B cell (primary cell): ENCODE measurements at regions of chr7 and their contacts with region 1.

Region 1: GRCh38 chr7:24979863-24980533 is at the start of gene OSBPL3:
- DNase-seq: peak; percentile 96
- ATAC-seq: peak; percentile 89
- H3K4me3 ChIP-seq: peak within 1 kb of the TSS; percentile 73 to 97 (median 87)
- H3K4me3 Mint-ChIP-seq: peak within 1 kb of the TSS; percentile 95
- H3K27ac ChIP-seq: peak within 1 kb of the TSS; percentile 55 to 78
- H3K27ac Mint-ChIP-seq: peak within 1 kb of the TSS; percentile 96
- H3K4me1 ChIP-seq: peaks cover 17 to 27% of the 10 kb centered on the region in 2 donors
- H3K4me1 Mint-ChIP-seq: peaks cover 52% of the 10 kb centered on the region
- H3K27me3 ChIP-seq: no peaks in the 10 kb centered on the region
- H3K27me3 Mint-ChIP-seq: no peaks in the 10 kb centered on the region
- CTCF ChIP-seq: no peak
- total RNA-seq, gene OSBPL3: 67.6 and 80.6 TPM in 2 replicates

Region 2: DNA sequence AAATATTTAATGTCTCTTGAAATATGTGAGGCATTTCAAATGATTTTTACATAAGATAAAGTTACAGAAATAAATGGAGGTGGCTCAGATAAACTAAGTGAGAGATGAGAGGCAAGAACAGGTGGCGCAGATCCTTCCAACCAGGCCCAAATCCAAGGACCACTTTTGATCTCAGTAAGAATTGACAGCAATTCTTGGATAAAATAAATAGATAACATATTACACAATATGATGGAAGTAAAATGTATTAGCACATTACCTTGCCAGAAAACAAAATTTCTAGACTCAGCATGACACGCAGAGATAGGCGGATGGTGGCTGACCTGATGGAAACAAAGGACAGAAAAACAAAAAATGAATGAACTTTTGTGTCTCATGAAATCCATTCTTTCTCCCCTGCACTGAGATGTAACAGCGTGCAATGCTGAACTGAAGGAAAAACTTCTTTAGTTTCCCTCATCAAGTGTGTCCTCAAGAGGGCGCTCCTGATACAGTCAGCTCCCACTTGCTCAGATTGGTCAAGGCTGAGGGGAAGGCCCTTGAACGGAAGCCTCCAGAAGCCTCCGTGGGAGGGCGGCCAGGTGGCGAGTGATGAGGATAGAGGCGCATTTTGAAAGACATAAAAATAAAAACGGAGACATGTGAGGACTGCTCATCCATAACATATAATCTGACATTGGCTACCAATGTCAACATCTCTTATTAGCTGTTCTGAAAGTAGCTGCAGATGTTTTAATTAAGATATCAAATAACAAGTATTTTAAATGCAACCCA is 159.9 kb before region 1 on chr7:
- CTCF ChIA-PET with region 1: interaction called, 116 read pairs
- POLR2A ChIA-PET with region 1: interaction called, 6 read pairs
- intact Hi-C with region 1: loop called (anchors 1 kb)
- DNase-seq: peak; percentile 88
- ATAC-seq: peak; percentile 56
- H3K4me3 ChIP-seq: peak overlapping the region in 1 of 5 experiments; percentile 17
- H3K4me3 Mint-ChIP-seq: peak overlapping the region; percentile 83
- H3K27ac ChIP-seq: peak overlapping the region; percentile 76 to 83
- H3K27ac Mint-ChIP-seq: peak overlapping the region; percentile 94
- H3K4me1 ChIP-seq: peaks cover 27% of the 10 kb centered on the region in 2 donors
- H3K4me1 Mint-ChIP-seq: peaks cover 40% of the 10 kb centered on the region
- H3K27me3 ChIP-seq: no peaks in the 10 kb centered on the region
- H3K27me3 Mint-ChIP-seq: no peaks in the 10 kb centered on the region
- CTCF ChIP-seq: peak; percentile 93

Region 3: GRCh38 chr7:24877790-24878311 is 102.1 kb before region 1 on chr7:
- CTCF ChIA-PET with region 1: interaction called, 11 read pairs
- POLR2A ChIA-PET with region 1: interaction called, 4 read pairs
- intact Hi-C with region 1: loop called (anchors 1 kb)
- DNase-seq: peak; percentile 59
- ATAC-seq: peak; percentile 90
- H3K4me3 ChIP-seq: no peak overlapping the region
- H3K4me3 Mint-ChIP-seq: peak overlapping the region; percentile 43
- H3K27ac ChIP-seq: peak overlapping the region in 1 of 2 donors; percentile 43
- H3K27ac Mint-ChIP-seq: peak overlapping the region; percentile 54
- H3K4me1 ChIP-seq: peaks cover 19 to 20% of the 10 kb centered on the region in 2 donors
- H3K4me1 Mint-ChIP-seq: peaks cover 29% of the 10 kb centered on the region
- H3K27me3 ChIP-seq: no peaks in the 10 kb centered on the region
- H3K27me3 Mint-ChIP-seq: no peaks in the 10 kb centered on the region
- CTCF ChIP-seq: no peak

Region 4: DNA sequence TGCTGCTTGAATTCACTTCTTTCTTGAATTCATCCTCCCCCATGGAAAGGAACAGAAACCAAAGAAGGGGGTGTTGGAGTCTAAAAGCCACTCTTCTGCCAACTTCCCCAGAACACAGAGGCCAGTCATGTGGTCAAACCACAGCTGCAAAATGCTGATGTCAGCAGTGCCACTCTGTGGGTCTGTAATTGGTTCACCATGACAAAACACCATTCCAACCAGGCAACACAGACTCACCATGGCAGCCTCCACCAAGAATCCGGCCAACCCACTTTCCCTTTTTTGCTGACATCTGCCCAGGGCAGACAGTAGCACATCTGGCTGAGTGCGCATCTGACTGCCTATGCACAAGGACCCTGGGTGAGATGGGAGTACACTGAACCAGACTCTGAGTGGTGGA is 16.8 kb before region 1 on chr7:
- CTCF ChIA-PET with region 1: interaction called, 19 read pairs
- POLR2A ChIA-PET with region 1: interaction called, 3 read pairs
- intact Hi-C with region 1: loop called (anchors 1 kb)
- DNase-seq: peak; percentile 88
- ATAC-seq: peak; percentile 88
- H3K4me3 ChIP-seq: no peak overlapping the region
- H3K4me3 Mint-ChIP-seq: peak overlapping the region; percentile 64
- H3K27ac ChIP-seq: peak overlapping the region; percentile 3 to 54
- H3K27ac Mint-ChIP-seq: peak overlapping the region; percentile 89
- H3K4me1 ChIP-seq: peaks cover 42 to 47% of the 10 kb centered on the region in 2 donors
- H3K4me1 Mint-ChIP-seq: peaks cover 80% of the 10 kb centered on the region
- H3K27me3 ChIP-seq: no peaks in the 10 kb centered on the region
- H3K27me3 Mint-ChIP-seq: no peaks in the 10 kb centered on the region
- CTCF ChIP-seq: no peak

Region 5: DNA sequence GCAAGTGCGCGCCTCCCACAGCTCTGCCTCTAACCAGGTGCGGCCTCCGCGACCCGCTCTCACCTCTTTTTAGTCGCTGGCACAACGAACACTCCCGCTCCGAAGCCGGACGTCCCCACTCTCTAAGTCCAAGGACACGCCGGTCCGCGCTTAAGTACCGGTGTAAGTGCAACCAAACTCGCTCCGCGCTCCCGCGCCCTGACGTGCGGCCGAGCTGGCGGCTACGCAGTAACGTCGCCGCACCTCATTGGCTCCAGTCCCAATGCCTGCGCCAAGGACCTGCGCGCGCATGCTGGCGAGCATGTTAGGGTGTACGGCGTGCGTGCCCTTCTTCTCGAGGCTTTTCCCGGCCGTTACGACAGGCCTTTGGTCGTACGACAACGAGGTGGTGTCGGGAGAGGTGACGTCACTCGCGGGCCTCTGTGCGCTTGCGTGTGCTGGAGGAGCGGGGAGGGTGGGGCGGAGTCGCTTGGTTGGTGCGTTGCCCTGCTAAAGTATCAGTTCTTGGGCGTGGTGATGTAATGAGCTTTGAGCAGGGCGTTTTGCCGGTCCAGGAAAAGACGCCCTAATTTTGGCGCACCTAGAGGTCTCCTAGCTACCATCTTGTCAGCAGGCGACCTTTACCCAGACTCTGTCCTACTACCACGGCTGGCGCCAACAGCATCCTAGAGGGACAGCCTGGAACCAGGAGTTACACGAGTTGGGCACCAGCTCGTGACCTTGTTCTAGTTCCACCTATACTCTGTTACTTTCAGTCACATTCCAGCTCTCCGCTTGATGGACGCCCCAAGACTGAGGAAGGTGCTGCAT is 145.3 kb after region 1 on chr7 and contains the start of gene CYCS:
- CTCF ChIA-PET with region 1: interaction called, 3 read pairs
- POLR2A ChIA-PET with region 1: interaction called, 3 read pairs
- intact Hi-C with region 1: loop called (anchors 1 kb)
- DNase-seq: peak; percentile 100
- ATAC-seq: peak; percentile 91
- H3K4me3 ChIP-seq: peak within 1 kb of the TSS; percentile 57 to 94 (median 86)
- H3K4me3 Mint-ChIP-seq: peak within 1 kb of the TSS; percentile 100
- H3K27ac ChIP-seq: peak within 1 kb of the TSS; percentile 96 to 99
- H3K27ac Mint-ChIP-seq: peak within 1 kb of the TSS; percentile 99
- H3K4me1 ChIP-seq: peaks cover 13 to 15% of the 10 kb centered on the region in 2 donors
- H3K4me1 Mint-ChIP-seq: peaks cover 27% of the 10 kb centered on the region
- H3K27me3 ChIP-seq: no peaks in the 10 kb centered on the region
- H3K27me3 Mint-ChIP-seq: no peaks in the 10 kb centered on the region
- CTCF ChIP-seq: no peak
- total RNA-seq, gene CYCS: 48.8 and 51.3 TPM in 2 replicates